ENCODE measurements at regions of chr14 and their contacts with region 1.

Region 1: DNA sequence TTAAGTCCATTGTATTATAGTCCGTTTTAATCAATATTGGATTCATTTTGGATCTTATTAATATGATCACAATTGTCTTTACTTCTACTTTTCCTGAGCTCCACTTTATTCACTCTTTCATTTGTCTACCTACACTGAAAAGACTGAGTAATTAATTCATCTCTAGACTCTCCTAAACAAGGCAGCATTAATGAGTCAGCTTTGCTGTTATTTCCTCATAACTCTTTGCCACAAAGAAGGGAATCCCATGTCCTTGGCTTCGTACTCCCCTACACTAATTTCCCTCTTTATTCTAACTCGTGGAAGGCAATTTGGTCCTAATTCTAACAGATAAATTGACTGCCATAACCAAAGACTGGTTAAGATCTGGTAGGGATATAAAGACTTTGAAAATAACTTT is 91.9 kb downstream of the ARMH4 start:
- DNase-seq: no peak
- H3K4me3 ChIP-seq: no peak overlapping the region
- H3K27ac ChIP-seq: no peak overlapping the region
- H3K4me1 ChIP-seq: peaks cover 3% of the 10 kb centered on the region
- H3K27me3 ChIP-seq: no peaks in the 10 kb centered on the region
- CTCF ChIP-seq: no peak
- EP300 ChIP-seq: no peak
- POLR2A ChIP-seq: no peak

Region 2: DNA sequence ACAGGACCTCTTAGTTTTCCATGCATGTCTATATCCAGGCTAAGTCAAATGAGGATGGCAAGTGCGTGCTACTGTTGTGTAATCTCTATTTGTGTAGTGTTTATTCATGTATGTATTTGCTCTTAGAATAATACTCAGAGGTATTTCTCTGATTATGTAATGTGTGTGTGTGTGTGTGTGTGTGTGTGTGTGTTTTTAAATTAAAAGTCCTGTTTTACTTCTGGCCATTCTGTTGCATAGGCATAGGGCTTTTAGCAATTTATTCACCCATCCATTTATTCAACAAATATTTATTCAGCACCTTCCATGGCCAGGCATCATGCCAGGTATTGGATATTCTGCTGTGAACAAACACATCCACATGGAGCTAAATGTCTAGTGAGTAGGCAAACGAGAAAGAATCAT is 1878.4 kb before region 1 on chr14:
- intact Hi-C with region 1: no loop called
- DNase-seq: no peak
- H3K4me3 ChIP-seq: no peak overlapping the region
- H3K27ac ChIP-seq: peak overlapping the region in 1 of 2 donors; percentile 44
- H3K4me1 ChIP-seq: peaks cover 9% of the 10 kb centered on the region
- H3K27me3 ChIP-seq: no peaks in the 10 kb centered on the region
- CTCF ChIP-seq: no peak
- EP300 ChIP-seq: no peak
- POLR2A ChIP-seq: no peak

Region 3: GRCh38 chr14:57486767-57487379 is 573.2 kb before region 1 on chr14:
- intact Hi-C with region 1: loop called in 1 of 4 experiments (anchors 10 kb)
- DNase-seq: no peak
- H3K4me3 ChIP-seq: no peak overlapping the region
- H3K27ac ChIP-seq: no peak overlapping the region
- H3K4me1 ChIP-seq: no peaks in the 10 kb centered on the region
- H3K27me3 ChIP-seq: no peaks in the 10 kb centered on the region
- CTCF ChIP-seq: peak; percentile 15 to 44 (median 37)
- EP300 ChIP-seq: no peak
- POLR2A ChIP-seq: no peak